Activated naive CD4-positive, alpha-beta T cell treated with anti-CD3 and anti-CD28 coated beads, Interleukin-2, amount 10 ng/mL, durations not matched to agents 7 days and 5 days (primary cell): ENCODE measurements at regions of chr9 and their contacts with region 1.

Region 1: GRCh38 chr9:38263532-38263931 is 129.0 kb upstream of the ALDH1B1 start:
- DNase-seq: no peak
- H3K4me3 Mint-ChIP-seq: no peak overlapping the region
- H3K27ac Mint-ChIP-seq: no peak overlapping the region
- H3K4me1 Mint-ChIP-seq: no peaks in the 10 kb centered on the region
- H3K27me3 Mint-ChIP-seq: peaks cover 21% of the 10 kb centered on the region

Region 2: GRCh38 chr9:37913480-37914153 is 349.9 kb before region 1 on chr9:
- CTCF ChIA-PET with region 1: interaction called, 10 read pairs
- DNase-seq: peak; percentile 86
- H3K4me3 Mint-ChIP-seq: no peak overlapping the region
- H3K27ac Mint-ChIP-seq: no peak overlapping the region
- H3K4me1 Mint-ChIP-seq: no peaks in the 10 kb centered on the region
- H3K27me3 Mint-ChIP-seq: no peaks in the 10 kb centered on the region

Region 3: GRCh38 chr9:38026021-38026809 is 237.3 kb before region 1 on chr9:
- CTCF ChIA-PET with region 1: no interaction called
- DNase-seq: no peak
- H3K4me3 Mint-ChIP-seq: no peak overlapping the region
- H3K27ac Mint-ChIP-seq: no peak overlapping the region
- H3K4me1 Mint-ChIP-seq: no peaks in the 10 kb centered on the region
- H3K27me3 Mint-ChIP-seq: peaks cover 4% of the 10 kb centered on the region